CD8-positive, alpha-beta T cell (primary cell): ENCODE measurements at regions of chr2 and their contacts with region 1.

Region 1: DNA sequence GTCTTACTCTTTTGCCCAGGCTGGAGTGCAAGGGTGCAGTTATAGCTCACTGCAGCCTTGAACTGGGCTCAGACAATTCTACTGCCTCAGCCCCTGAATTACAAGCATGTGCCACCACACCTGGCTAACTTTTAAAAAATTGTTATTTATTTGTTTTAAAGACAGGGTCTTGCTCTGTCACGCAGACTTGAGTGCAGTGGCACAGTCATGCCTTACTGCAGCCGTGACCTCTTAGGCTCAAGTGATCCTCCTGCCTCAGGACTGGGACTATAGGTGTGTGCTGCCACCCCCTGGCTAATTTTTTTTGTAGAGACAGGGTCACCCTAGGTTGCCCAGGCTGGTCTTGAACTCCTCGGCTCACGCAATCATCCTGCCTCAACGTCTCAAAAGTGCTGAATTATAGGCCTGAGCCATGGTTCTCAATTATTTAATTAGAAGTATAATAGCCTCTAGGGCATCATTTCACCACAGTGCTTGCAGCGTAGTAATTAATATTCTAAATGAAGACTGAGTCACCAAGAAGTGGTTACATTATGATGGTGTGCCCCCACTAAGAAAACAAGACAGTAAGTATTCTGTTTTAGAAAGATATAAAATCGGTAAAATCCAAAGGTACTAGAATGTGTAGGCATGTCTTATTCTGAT is 69.6 kb downstream of the EML4 start:
- DNase-seq: peak in 7 of 9 experiments; percentile 10 to 60 (median 31)
- ATAC-seq: peak; percentile 56
- H3K4me3 ChIP-seq: no peak overlapping the region
- H3K4me3 Mint-ChIP-seq: no peak overlapping the region
- H3K27ac ChIP-seq: no peak overlapping the region
- H3K27ac Mint-ChIP-seq: no peak overlapping the region
- H3K4me1 ChIP-seq: peaks cover 40% of the 10 kb centered on the region
- H3K4me1 Mint-ChIP-seq: peaks cover 87% of the 10 kb centered on the region
- H3K27me3 ChIP-seq: no peaks in the 10 kb centered on the region
- H3K27me3 Mint-ChIP-seq: no peaks in the 10 kb centered on the region
- CTCF ChIP-seq: no peak

Region 2: GRCh38 chr2:43324259-43325106 is 1085.7 kb after region 1 on chr2:
- CTCF ChIA-PET with region 1: no interaction called
- POLR2A ChIA-PET with region 1: no interaction called
- intact Hi-C with region 1: loop called in 1 of 2 experiments (anchors 10 kb)
- DNase-seq: no peak
- ATAC-seq: no peak
- H3K4me3 ChIP-seq: no peak overlapping the region
- H3K4me3 Mint-ChIP-seq: no peak overlapping the region
- H3K27ac ChIP-seq: no peak overlapping the region
- H3K27ac Mint-ChIP-seq: no peak overlapping the region
- H3K4me1 ChIP-seq: no peaks in the 10 kb centered on the region
- H3K4me1 Mint-ChIP-seq: no peaks in the 10 kb centered on the region
- H3K27me3 ChIP-seq: no peaks in the 10 kb centered on the region
- H3K27me3 Mint-ChIP-seq: no peaks in the 10 kb centered on the region
- CTCF ChIP-seq: no peak